ENCODE measurements at regions of chr2 and their contacts with region 1.

Region 1: GRCh38 chr2:36785179-36785795 is 88.8 kb downstream of the VIT start:
- DNase-seq: peak; percentile 27
- H3K4me3 ChIP-seq: no peak overlapping the region
- H3K27ac ChIP-seq: no peak overlapping the region
- H3K27me3 ChIP-seq: peaks cover 33% of the 10 kb centered on the region
- CTCF ChIP-seq: peak; percentile 99

Region 2: GRCh38 chr2:36770542-36771287 is 14.6 kb before region 1 on chr2:
- CTCF ChIA-PET with region 1: interaction called, 27 read pairs
- POLR2A ChIA-PET with region 1: no interaction called
- DNase-seq: no peak
- H3K4me3 ChIP-seq: no peak overlapping the region
- H3K27ac ChIP-seq: no peak overlapping the region
- H3K27me3 ChIP-seq: peaks cover 16% of the 10 kb centered on the region
- CTCF ChIP-seq: peak; percentile 63

Region 3: DNA sequence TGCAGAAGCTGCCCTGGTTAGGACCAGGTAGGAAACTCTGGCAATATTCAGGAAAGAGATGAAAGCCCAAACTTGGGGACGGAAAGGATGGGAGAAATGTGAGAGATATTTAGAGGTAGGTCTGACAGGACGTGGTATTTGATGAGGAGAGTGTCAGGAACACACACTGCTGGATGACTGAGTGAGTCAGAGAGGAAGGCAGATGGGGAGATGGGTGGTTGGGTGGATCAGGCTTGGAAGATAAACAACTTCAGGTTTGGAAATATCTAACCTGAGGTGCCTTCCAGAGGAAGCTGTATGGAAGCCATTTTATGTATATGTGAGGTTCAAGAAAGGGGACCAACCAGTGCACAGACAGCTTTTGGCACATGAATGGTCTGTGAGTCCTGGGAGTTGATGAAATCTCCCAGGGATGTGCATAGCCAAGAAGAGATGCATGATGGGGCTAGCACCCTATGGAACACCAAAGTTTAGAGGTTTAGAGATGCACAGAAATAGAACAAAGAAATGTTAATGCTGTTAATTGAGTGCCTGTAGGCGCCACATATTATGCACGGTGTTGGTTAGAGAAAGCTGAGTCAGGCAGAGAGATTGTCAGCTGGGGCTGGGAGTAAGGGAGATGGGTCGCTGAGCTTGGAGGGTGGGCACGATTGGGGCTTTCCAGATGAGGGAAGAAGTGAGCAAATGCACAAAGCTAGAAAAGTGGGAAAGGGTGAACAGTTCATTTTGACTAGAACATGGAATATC is 12.2 kb after region 1 on chr2:
- CTCF ChIA-PET with region 1: interaction called, 67 read pairs
- POLR2A ChIA-PET with region 1: no interaction called
- DNase-seq: no peak
- H3K4me3 ChIP-seq: no peak overlapping the region
- H3K27ac ChIP-seq: no peak overlapping the region
- H3K27me3 ChIP-seq: peaks cover 13% of the 10 kb centered on the region
- CTCF ChIP-seq: no peak

Region 4: GRCh38 chr2:36918307-36918706 is 133.0 kb after region 1 on chr2:
- CTCF ChIA-PET with region 1: interaction called, 29 read pairs
- POLR2A ChIA-PET with region 1: no interaction called
- DNase-seq: no peak
- H3K4me3 ChIP-seq: no peak overlapping the region
- H3K27ac ChIP-seq: no peak overlapping the region
- H3K27me3 ChIP-seq: no peaks in the 10 kb centered on the region
- CTCF ChIP-seq: peak; percentile 40; the same call in 1 of the 2 replicates

Measured in AG04450 (cell line).